Adrenal gland (tissue), 19 donors: ENCODE measurements at regions of chr12 and their contacts with region 1.

Region 1: GRCh38 chr12:29073628-29074239 is 75.3 kb upstream of the FAR2 start:
- DNase-seq: peak in 1 of 7 donors; percentile 22
- H3K4me3 ChIP-seq: no peak overlapping the region
- H3K27ac ChIP-seq: no peak overlapping the region
- H3K4me1 ChIP-seq: no peaks in the 10 kb centered on the region
- H3K27me3 ChIP-seq: no peaks in the 10 kb centered on the region
- CTCF ChIP-seq: peak; percentile 56 to 72 (median 62)
- POLR2A ChIP-seq: no peak

Region 2: GRCh38 chr12:29238822-29239291 is 165.1 kb after region 1 on chr12:
- intact Hi-C with region 1: no loop called
- DNase-seq: no peak
- H3K4me3 ChIP-seq: no peak overlapping the region
- H3K27ac ChIP-seq: no peak overlapping the region
- H3K4me1 ChIP-seq: peaks cover 0 to 5% of the 10 kb centered on the region in 2 donors
- H3K27me3 ChIP-seq: no peaks in the 10 kb centered on the region
- CTCF ChIP-seq: no peak
- POLR2A ChIP-seq: no peak

Region 3: GRCh38 chr12:29317556-29318363 is 244.0 kb after region 1 on chr12:
- intact Hi-C with region 1: loop called in 1 of 2 experiments (anchors 10 kb)
- DNase-seq: peak; percentile 21 to 83 (median 38)
- H3K4me3 ChIP-seq: no peak overlapping the region
- H3K27ac ChIP-seq: no peak overlapping the region
- H3K4me1 ChIP-seq: no peaks in the 10 kb centered on the region
- H3K27me3 ChIP-seq: no peaks in the 10 kb centered on the region
- CTCF ChIP-seq: peak; percentile 30 to 89 (median 70)
- POLR2A ChIP-seq: no peak